AG04450 (cell line): ENCODE measurements at regions of chr17 and their contacts with region 1.

Region 1: DNA sequence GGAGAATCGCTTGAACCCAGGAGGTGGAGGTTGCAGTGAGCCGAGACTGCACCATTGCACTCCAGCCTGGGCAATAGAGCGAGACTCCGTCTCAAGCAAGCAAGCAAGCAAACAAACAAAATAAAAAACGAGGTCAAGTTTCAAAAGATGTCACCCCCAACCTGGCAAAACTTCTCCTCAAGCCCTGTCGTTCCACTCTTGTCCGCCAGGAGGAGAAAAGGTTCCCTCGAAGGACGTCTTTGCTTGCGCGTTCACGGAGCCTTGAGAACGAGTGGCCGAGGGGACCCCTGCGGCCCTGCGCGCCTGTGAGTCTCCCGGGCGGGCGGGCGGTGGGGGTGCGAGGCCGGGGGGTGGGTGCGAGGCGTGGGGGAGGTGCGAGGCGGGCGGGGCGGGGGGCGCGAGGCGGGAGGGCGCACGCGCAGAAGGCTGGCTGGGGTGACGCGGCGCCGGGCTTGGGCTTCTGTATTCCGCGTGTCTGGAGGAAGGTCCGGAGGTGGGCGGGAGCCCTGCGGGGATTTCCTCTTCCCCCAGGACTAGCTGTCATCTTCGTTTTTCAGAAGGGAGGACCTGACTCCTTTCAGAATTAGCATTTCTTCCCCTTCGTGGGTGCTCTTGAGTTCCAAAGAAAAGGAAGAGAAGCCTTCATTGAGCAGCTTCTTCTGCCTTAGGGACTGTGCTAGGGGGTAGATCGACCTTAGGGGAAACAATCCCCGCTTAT is 3.7 kb downstream of the SLC52A1 start:
- DNase-seq: peak; percentile 26
- H3K4me3 ChIP-seq: peak overlapping the region; percentile 48
- H3K27ac ChIP-seq: no peak overlapping the region
- H3K27me3 ChIP-seq: peaks cover 7% of the 10 kb centered on the region
- CTCF ChIP-seq: peak; percentile 78

Region 2: DNA sequence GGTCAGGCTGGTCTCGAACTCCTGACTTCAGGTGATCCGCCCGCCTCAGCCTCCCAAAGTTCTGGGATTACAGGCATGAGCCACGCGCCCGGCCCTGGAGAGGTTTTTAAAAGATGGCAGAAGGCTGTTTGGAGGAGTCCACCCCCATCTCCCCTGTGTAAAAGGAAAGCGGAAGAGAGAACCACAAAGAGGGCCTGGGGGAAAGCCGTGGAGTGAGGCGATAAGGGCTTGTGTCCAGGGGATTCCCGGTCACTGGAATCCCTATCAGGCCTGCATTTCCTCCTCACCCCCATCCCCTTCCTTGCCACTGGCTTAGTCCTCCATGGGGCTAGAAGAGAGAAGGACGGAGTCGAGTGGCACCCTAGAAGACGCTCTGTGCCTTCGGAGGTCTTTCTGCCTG is 99.6 kb before region 1 on chr17 and contains the start of gene GP1BA:
- CTCF ChIA-PET with region 1: no interaction called
- POLR2A ChIA-PET with region 1: no interaction called
- DNase-seq: no peak
- H3K4me3 ChIP-seq: no peak within 1 kb of the TSS
- H3K27ac ChIP-seq: no peak within 1 kb of the TSS
- H3K27me3 ChIP-seq: no peaks in the 10 kb centered on the region
- CTCF ChIP-seq: no peak
- polyA plus RNA-seq, gene GP1BA: not detected in 2 replicates

Region 3: DNA sequence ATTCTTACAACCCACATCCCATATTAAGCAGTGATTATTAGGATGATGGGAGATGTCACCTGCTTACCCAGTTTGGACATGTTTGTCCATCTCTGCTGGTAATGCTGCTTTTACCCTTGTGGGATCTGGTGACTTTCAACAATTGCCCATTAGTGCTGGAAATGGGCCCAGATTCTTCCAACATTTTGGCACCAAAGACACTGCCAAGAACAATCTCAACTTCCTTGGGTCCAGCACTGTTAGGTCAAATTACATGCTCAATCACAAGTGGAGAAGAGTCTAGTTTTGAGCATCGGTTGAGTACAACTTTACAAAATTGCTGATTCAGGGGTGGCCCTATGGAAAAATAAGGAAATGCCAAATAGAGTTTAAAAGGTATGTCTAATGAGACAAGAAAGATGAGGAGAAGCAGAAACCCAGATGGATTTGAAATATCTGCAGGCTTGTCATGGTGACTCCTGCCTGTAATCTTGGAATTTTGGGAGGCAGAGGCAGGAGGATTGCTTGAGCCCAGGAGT is 33.8 kb after region 1 on chr17:
- CTCF ChIA-PET with region 1: interaction called, 28 read pairs
- POLR2A ChIA-PET with region 1: no interaction called
- DNase-seq: no peak
- H3K4me3 ChIP-seq: no peak overlapping the region
- H3K27ac ChIP-seq: no peak overlapping the region
- H3K27me3 ChIP-seq: peaks cover 5% of the 10 kb centered on the region
- CTCF ChIP-seq: no peak

Region 4: GRCh38 chr17:5122586-5123342 is 91.2 kb after region 1 on chr17:
- CTCF ChIA-PET with region 1: no interaction called
- POLR2A ChIA-PET with region 1: no interaction called
- DNase-seq: no peak
- H3K4me3 ChIP-seq: peak overlapping the region; percentile 56
- H3K27ac ChIP-seq: no peak overlapping the region
- H3K27me3 ChIP-seq: peaks cover 14% of the 10 kb centered on the region
- CTCF ChIP-seq: no peak